ENCODE measurements at regions of chr7 and their contacts with region 1.

Region 1: DNA sequence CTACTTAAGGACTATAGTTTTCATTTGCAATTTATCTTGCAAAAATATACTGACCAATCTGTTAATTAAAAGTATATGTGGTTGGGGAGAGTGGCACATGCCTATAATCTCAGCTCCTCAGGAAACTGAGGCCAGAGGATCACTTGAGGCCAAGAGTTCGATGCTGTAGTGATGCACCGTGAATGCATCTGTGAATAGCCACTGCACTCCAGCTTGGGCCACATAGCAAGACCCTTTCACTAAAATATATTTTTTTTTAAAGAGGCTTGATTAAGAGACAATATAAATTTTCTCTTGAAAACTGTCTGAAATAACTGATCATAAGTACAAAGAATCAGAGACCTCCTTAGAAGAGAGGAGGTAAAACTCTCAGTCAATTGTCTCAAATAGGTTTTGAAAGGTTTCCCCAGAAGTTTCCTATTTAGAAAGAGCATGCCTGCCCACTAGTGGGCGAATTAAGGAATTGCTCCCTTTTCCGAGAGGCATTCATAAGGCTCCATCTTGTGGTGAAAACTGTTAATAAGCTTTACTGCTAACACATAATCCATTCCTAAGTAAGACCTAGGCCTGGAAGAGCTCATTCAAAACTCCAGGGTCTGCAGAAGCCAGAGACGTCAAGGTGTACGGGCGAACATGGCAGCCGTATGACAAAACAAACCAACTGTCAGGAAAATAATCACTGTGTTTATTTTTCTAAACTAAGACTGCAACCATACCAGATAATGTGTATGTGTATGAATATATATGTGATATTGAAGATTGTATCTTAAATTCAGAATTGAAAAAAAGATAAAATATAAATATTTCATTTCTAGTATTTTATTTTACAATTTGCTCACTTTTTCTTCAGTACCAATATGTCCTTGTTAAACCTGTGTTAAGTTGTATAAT is 6.8 kb upstream of the TAS2R40 start:
- DNase-seq: peak; percentile 89
- H3K4me3 Mint-ChIP-seq: no peak overlapping the region
- H3K27ac Mint-ChIP-seq: no peak overlapping the region
- H3K4me1 Mint-ChIP-seq: no peaks in the 10 kb centered on the region
- H3K27me3 Mint-ChIP-seq: peaks cover 25% of the 10 kb centered on the region
- CTCF ChIP-seq: peak; percentile 99

Region 2: GRCh38 chr7:142853739-142854371 is 361.2 kb before region 1 on chr7:
- CTCF ChIA-PET with region 1: interaction called, 9 read pairs
- POLR2A ChIA-PET with region 1: no interaction called
- intact Hi-C with region 1: loop called (anchors 1 kb)
- DNase-seq: peak; percentile 76
- H3K4me3 Mint-ChIP-seq: peak overlapping the region; percentile 82
- H3K27ac Mint-ChIP-seq: peak overlapping the region; percentile 55
- H3K4me1 Mint-ChIP-seq: peaks cover 29% of the 10 kb centered on the region
- H3K27me3 Mint-ChIP-seq: peaks cover 51% of the 10 kb centered on the region
- CTCF ChIP-seq: peak; percentile 88

Region 3: GRCh38 chr7:142880876-142881505 is 334.0 kb before region 1 on chr7:
- CTCF ChIA-PET with region 1: interaction called, 8 read pairs
- POLR2A ChIA-PET with region 1: no interaction called
- intact Hi-C with region 1: loop called (anchors 10 kb)
- DNase-seq: peak; percentile 61
- H3K4me3 Mint-ChIP-seq: no peak overlapping the region
- H3K27ac Mint-ChIP-seq: no peak overlapping the region
- H3K4me1 Mint-ChIP-seq: no peaks in the 10 kb centered on the region
- H3K27me3 Mint-ChIP-seq: peaks cover 68% of the 10 kb centered on the region
- CTCF ChIP-seq: peak; percentile 84

Region 4: DNA sequence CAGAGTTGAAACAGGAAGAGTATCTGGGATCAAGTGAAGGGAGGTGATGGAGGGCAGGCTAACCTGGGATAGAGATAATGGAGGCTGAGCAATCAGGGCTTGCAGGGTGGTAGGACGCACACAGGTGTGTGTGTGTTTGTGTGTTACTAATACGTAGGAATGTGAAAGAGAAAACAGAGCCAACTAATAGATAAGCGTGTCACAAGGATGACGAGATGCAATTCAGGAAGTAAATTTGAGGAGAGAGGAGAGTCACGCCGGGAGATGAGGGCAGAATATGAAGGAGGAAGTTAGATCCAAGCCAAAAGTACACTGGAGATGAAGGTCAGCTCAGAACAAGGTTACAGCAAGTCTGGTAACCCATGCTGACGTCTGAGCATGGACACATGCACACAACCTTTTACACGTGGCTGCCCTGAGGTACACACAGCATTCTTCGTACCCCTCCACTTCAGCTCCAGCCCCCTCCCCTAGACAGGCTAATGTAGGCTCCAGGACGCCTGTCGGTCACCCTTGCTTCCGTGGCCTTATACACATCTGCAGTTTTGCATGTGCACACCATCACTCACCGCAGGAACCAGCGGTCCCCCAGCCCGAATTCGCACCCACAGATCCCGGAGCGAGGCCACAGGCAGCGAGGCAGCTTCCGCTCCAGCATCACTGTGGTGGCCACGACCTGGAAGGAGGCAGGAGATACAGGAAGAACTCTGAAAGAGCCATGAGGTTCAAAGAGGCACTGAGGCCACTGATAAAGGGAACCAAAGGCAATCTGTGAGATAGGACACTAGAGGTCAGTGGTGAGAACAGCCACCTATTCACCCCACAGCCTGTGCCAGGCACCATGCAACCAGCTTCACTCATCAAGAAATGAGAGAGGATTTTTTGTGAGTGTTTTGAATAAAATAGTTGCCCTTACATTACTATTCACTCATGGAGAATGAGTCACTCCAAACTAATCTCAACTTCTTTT is 305.8 kb before region 1 on chr7:
- CTCF ChIA-PET with region 1: no interaction called
- POLR2A ChIA-PET with region 1: no interaction called
- intact Hi-C with region 1: loop called (anchors 2 kb)
- DNase-seq: peak; percentile 46
- H3K4me3 Mint-ChIP-seq: no peak overlapping the region
- H3K27ac Mint-ChIP-seq: no peak overlapping the region
- H3K4me1 Mint-ChIP-seq: no peaks in the 10 kb centered on the region
- H3K27me3 Mint-ChIP-seq: peaks cover 73% of the 10 kb centered on the region
- CTCF ChIP-seq: peak; percentile 29

Region 5: GRCh38 chr7:143172354-143172753 is 42.7 kb before region 1 on chr7:
- CTCF ChIA-PET with region 1: interaction called, 11 read pairs
- POLR2A ChIA-PET with region 1: no interaction called
- intact Hi-C with region 1: no loop called
- DNase-seq: peak; percentile 71
- H3K4me3 Mint-ChIP-seq: peak overlapping the region; percentile 32
- H3K27ac Mint-ChIP-seq: no peak overlapping the region
- H3K4me1 Mint-ChIP-seq: peaks cover 11% of the 10 kb centered on the region
- H3K27me3 Mint-ChIP-seq: no peaks in the 10 kb centered on the region
- CTCF ChIP-seq: no peak

Region 6: GRCh38 chr7:143229054-143229790 is 14.2 kb after region 1 on chr7:
- CTCF ChIA-PET with region 1: interaction called, 13 read pairs
- POLR2A ChIA-PET with region 1: no interaction called
- intact Hi-C with region 1: no loop called
- DNase-seq: no peak
- H3K4me3 Mint-ChIP-seq: no peak overlapping the region
- H3K27ac Mint-ChIP-seq: no peak overlapping the region
- H3K4me1 Mint-ChIP-seq: no peaks in the 10 kb centered on the region
- H3K27me3 Mint-ChIP-seq: peaks cover 24% of the 10 kb centered on the region
- CTCF ChIP-seq: no peak

Region 7: DNA sequence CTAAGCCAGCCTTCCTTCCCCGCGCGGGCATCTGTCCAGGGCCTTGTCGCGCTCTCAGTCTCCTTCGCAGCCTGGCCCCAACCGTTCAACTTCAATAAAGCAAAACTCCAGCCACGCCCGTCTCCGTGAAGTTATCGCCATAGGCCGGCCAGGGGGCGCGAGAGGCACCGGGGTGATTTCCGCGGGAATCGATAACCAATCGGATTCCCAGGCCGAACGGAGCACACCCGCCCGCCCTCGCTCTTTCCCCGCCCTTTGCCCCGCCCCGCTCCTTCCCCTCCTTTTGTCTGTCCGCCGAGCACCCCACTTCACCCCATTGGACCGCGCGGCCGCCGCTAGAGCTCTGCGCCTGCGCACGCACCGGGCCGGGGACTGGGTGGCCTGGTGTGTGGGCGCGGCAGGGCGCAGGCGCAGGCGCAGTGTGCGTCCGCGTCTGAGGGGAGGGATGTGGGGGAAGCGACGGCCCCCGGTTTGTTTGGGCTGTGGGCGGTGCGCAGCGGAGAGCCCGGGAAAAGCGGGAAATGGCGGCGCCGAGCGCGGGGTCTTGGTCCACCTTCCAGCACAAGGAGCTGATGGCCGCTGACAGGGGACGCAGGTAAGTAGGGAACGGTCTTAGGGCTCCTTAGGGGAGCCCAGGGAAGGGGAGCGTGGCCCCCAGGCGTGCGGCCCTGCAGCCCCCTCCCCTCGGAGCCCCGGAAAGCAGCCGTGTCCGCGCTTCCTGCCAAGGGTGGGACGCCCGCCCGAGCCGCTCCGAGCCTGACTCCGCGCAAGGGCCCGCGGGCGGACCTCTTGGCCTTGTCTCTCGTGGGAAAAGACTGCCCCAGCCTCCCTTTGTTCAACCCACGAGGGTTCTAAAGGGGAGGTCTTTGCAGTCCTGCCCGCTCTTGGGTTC is 73.1 kb after region 1 on chr7 and contains the start of gene CASP2:
- CTCF ChIA-PET with region 1: no interaction called
- POLR2A ChIA-PET with region 1: no interaction called
- intact Hi-C with region 1: no loop called
- DNase-seq: peak; percentile 97
- H3K4me3 Mint-ChIP-seq: peak within 1 kb of the TSS; percentile 98
- H3K27ac Mint-ChIP-seq: peak within 1 kb of the TSS; percentile 68
- H3K4me1 Mint-ChIP-seq: peaks cover 42% of the 10 kb centered on the region
- H3K27me3 Mint-ChIP-seq: no peaks in the 10 kb centered on the region
- CTCF ChIP-seq: no peak
- total RNA-seq, gene CASP2: 15.1 and 17.4 TPM in 2 replicates

Region 8: GRCh38 chr7:143447466-143447865 is 232.4 kb after region 1 on chr7:
- CTCF ChIA-PET with region 1: no interaction called
- POLR2A ChIA-PET with region 1: no interaction called
- intact Hi-C with region 1: no loop called
- DNase-seq: no peak
- H3K4me3 Mint-ChIP-seq: no peak overlapping the region
- H3K27ac Mint-ChIP-seq: no peak overlapping the region
- H3K4me1 Mint-ChIP-seq: no peaks in the 10 kb centered on the region
- H3K27me3 Mint-ChIP-seq: peaks cover 15% of the 10 kb centered on the region
- CTCF ChIP-seq: no peak